K562 (cell line): ENCODE measurements at regions of chr7 and their contacts with region 1.

Region 1: GRCh38 chr7:38107486-38107893 is 70.6 kb upstream of the STARD3NL start:
- DNase-seq: peak; percentile 61 to 80 (median 67)
- ATAC-seq: peak; percentile 96
- H3K4me3 ChIP-seq: no peak overlapping the region
- H3K27ac ChIP-seq: no peak overlapping the region
- H3K4me1 ChIP-seq: no peaks in the 10 kb centered on the region
- H3K27me3 ChIP-seq: no peaks in the 10 kb centered on the region; a peak in 1 of 5 replicates
- CTCF ChIP-seq: peak; percentile 71 to 84 (median 81)
- EP300 ChIP-seq: no peak
- POLR2A ChIP-seq: no peak
- RAD21 ChIP-seq: peak; percentile 87 to 95

Region 2: GRCh38 chr7:37901236-37901827 is 206.2 kb before region 1 on chr7:
- CTCF ChIA-PET with region 1: interaction called, 7 read pairs
- POLR2A ChIA-PET with region 1: interaction called, 3 read pairs
- in situ Hi-C with region 1: no loop called
- intact Hi-C with region 1: loop called (anchors 1 kb)
- DNase-seq: peak; percentile 37 to 58 (median 41)
- ATAC-seq: peak; percentile 87
- H3K4me3 ChIP-seq: no peak overlapping the region
- H3K27ac ChIP-seq: no peak overlapping the region
- H3K4me1 ChIP-seq: peaks cover 5 to 6% of the 10 kb centered on the region in 2 experiments; a peak in 3 of 5 replicates
- H3K27me3 ChIP-seq: no peaks in the 10 kb centered on the region
- CTCF ChIP-seq: peak; percentile 50 to 80 (median 58); a peak in 5 of 6 replicates
- EP300 ChIP-seq: no peak
- POLR2A ChIP-seq: no peak
- RAD21 ChIP-seq: peak; percentile 69 to 79

Region 3: DNA sequence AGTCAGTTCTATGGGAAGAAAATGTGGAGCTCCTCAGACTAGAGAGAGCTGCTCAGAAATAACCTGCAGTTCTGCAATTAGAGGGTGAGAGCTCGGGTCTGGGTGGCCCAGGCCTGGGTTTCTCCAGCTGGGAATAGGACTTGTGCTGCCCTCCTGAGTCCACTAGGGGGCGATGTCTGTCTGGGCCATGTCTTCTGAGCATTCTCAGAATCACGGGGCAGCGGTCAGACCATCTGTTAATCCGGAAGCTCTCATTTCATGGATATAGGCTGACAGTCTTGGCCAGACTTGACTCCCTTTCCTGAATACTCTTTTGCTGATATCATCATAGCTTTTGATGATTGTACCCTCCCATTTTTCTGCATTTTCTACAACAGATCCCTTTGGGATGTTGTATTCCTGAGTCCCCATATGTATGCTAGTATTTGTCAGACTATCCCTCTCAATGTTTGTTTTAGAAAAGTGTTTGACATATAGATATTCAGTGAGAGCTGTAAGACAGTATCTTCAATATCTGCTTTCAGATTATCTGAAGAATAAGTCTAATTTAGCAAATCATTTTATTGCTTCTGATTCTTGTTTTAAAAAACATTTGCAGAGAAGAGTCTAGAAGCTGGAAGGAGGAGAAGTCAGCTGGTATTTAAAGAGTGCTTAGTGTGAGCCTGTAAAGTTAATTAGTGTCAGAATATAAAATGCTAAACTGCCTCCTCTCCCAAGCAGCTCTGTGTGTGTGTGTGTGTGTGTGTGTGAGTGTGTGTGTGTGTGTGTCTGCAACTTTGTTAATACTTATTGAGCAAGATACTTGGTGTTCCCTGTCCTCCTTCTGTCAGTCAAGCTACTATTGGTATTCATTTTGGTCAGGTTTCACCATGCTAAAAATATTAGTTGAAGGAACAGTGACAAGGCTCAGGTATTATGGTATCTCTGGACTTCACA is 108.5 kb after region 1 on chr7:
- CTCF ChIA-PET with region 1: interaction called, 63 read pairs
- POLR2A ChIA-PET with region 1: interaction called, 3 read pairs
- in situ Hi-C with region 1: loop called (anchors 5 kb)
- intact Hi-C with region 1: loop called (anchors 2 kb)
- DNase-seq: peak; percentile 81 to 86 (median 83)
- ATAC-seq: peak; percentile 99
- H3K4me3 ChIP-seq: no peak overlapping the region
- H3K27ac ChIP-seq: no peak overlapping the region
- H3K4me1 ChIP-seq: no peaks in the 10 kb centered on the region
- H3K27me3 ChIP-seq: no peaks in the 10 kb centered on the region
- CTCF ChIP-seq: peak; percentile 94 to 96 (median 96)
- EP300 ChIP-seq: no peak
- POLR2A ChIP-seq: no peak
- RAD21 ChIP-seq: peak; percentile 90 to 91

Region 4: DNA sequence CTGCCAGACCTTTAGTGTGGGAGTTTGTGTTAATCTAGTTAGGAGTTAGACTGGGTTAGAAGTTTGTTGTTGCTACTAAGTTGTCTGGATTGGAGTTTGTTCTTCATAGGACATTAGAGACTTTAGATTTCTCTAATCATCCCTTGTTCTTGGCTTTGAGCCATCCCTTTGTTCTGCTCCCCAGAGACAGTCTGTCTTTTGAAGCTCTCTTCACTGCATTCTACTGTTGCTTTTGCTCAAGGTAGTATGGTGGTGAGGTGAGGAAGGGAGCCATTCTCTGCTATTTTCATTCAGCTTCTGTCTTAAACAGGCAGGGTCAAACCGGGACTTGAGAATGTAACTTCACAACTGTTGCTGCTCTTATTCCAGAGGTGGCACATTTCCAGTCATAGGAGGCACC is 176.3 kb after region 1 on chr7:
- CTCF ChIA-PET with region 1: no interaction called
- POLR2A ChIA-PET with region 1: no interaction called
- in situ Hi-C with region 1: no loop called
- intact Hi-C with region 1: no loop called
- DNase-seq: no peak
- ATAC-seq: no peak
- H3K4me3 ChIP-seq: no peak overlapping the region
- H3K27ac ChIP-seq: no peak overlapping the region
- H3K4me1 ChIP-seq: no peaks in the 10 kb centered on the region
- H3K27me3 ChIP-seq: peaks cover 5 to 18% of the 10 kb centered on the region in 2 experiments; a peak in 3 of 5 replicates
- CTCF ChIP-seq: no peak
- EP300 ChIP-seq: no peak
- POLR2A ChIP-seq: no peak
- RAD21 ChIP-seq: no peak

Region 5: GRCh38 chr7:38318803-38319416 is 211.4 kb after region 1 on chr7:
- CTCF ChIA-PET with region 1: interaction called, 12 read pairs
- POLR2A ChIA-PET with region 1: no interaction called
- in situ Hi-C with region 1: no loop called
- intact Hi-C with region 1: loop called (anchors 1 kb)
- DNase-seq: peak in 3 of 4 experiments; percentile 30 to 66 (median 55)
- ATAC-seq: peak; percentile 92
- H3K4me3 ChIP-seq: no peak overlapping the region
- H3K27ac ChIP-seq: no peak overlapping the region
- H3K4me1 ChIP-seq: no peaks in the 10 kb centered on the region; a peak in 1 of 5 replicates
- H3K27me3 ChIP-seq: 0 out of 5 replicates have a peak, but pooled peaks cover 0 to 5% of the 10 kb centered on the region in 2 experiments
- CTCF ChIP-seq: peak; percentile 59 to 82 (median 63)
- EP300 ChIP-seq: no peak
- POLR2A ChIP-seq: no peak
- RAD21 ChIP-seq: peak; percentile 79 to 91

Region 6: GRCh38 chr7:38369816-38370493 is 262.5 kb after region 1 on chr7:
- CTCF ChIA-PET with region 1: interaction called, 5 read pairs
- POLR2A ChIA-PET with region 1: no interaction called
- in situ Hi-C with region 1: no loop called
- intact Hi-C with region 1: loop called (anchors 5 kb)
- DNase-seq: peak; percentile 54 to 83 (median 64)
- ATAC-seq: peak; percentile 97
- H3K4me3 ChIP-seq: no peak overlapping the region
- H3K27ac ChIP-seq: no peak overlapping the region
- H3K4me1 ChIP-seq: no peaks in the 10 kb centered on the region
- H3K27me3 ChIP-seq: no peaks in the 10 kb centered on the region
- CTCF ChIP-seq: peak; percentile 76 to 89 (median 83)
- EP300 ChIP-seq: no peak
- POLR2A ChIP-seq: no peak
- RAD21 ChIP-seq: no peak; a peak in 1 of 4 replicates